Activated naive CD4-positive, alpha-beta T cell treated with anti-CD3 and anti-CD28 coated beads for 36 hours (primary cell): ENCODE measurements at regions of chr9 and their contacts with region 1.

Region 1: GRCh38 chr9:92706216-92706940 is 36.4 kb upstream of the IPPK start:
- DNase-seq: peak; percentile 61
- H3K4me3 Mint-ChIP-seq: no peak overlapping the region
- H3K27ac Mint-ChIP-seq: peak overlapping the region; percentile 7
- H3K4me1 Mint-ChIP-seq: peaks cover 13% of the 10 kb centered on the region
- H3K27me3 Mint-ChIP-seq: no peaks in the 10 kb centered on the region

Region 2: DNA sequence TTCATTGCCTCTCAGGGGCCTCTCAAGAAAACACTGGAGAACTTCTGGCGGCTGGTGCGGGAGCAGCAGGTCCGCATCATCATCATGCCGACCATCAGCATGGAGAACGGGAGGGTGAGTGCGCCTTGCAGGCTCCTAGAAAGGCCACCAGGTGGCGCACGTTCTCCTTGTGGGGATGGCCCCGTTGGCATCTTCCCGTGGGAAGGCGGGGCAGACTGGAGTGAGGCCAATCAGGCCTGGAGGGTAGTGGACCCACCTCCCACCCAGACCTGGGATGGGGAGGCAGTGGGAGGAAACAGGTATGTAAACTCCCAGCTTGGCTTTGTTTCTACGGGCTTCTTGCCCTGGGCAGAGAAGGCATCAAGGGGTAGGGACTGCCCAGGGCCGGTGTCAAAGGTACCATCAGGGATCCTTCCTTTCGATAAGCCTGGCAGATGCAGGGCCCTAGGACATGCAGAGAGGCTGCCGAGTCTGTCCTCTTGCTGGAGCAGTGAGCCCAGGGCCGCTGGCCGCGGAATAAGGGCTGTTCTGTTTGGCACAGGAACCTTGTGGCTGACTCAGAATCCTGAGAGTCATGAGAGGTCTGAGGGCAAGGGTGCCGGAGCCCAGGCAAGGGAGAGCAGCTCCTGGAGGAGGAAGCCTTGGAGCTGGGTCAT is 572.3 kb before region 1 on chr9:
- CTCF ChIA-PET with region 1: no interaction called
- intact Hi-C with region 1: loop called (anchors 5 kb)
- DNase-seq: peak; percentile 86
- H3K4me3 Mint-ChIP-seq: peak overlapping the region; percentile 57
- H3K27ac Mint-ChIP-seq: no peak overlapping the region
- H3K4me1 Mint-ChIP-seq: peaks cover 6% of the 10 kb centered on the region
- H3K27me3 Mint-ChIP-seq: peaks cover 22% of the 10 kb centered on the region